Right ventricle myocardium superior (tissue), 1 donor: ENCODE measurements at regions of chr20 and their contacts with region 1.

Region 1: DNA sequence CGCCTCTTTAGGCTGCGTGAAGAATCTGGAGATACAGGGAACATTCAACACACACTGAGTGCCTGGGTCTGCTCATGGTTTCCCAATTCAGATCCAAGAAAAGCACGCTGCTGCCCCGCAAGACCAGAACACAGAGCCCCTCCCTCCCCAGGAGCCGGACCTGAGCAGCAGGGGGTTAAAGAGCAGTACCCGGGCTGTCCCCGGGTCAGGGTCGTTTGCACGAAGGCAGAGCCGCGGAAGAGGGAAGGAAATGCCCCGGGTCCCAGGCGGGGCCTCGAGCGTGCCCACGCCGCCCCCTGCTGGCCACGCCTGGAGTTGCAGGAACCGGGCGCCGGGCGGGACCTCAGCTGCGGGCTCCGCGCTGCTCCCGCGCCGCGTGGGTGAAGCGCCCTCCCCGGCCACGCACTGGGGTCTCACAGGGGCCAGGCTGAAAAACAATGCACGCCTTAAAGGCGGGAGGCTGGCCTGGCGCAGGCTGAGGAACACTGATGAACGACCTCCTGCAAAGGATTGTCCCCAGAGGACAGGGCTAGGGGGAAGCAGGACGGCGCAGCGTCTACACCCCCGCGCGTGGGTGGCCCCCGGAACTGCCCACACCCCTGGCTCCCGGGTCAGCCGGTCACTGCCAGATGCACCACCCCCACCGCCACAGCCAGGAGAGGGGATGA is 48.9 kb downstream of the ANKRD60 start:
- DNase-seq: peak; percentile 80
- ATAC-seq: peak; percentile 85

Region 2: DNA sequence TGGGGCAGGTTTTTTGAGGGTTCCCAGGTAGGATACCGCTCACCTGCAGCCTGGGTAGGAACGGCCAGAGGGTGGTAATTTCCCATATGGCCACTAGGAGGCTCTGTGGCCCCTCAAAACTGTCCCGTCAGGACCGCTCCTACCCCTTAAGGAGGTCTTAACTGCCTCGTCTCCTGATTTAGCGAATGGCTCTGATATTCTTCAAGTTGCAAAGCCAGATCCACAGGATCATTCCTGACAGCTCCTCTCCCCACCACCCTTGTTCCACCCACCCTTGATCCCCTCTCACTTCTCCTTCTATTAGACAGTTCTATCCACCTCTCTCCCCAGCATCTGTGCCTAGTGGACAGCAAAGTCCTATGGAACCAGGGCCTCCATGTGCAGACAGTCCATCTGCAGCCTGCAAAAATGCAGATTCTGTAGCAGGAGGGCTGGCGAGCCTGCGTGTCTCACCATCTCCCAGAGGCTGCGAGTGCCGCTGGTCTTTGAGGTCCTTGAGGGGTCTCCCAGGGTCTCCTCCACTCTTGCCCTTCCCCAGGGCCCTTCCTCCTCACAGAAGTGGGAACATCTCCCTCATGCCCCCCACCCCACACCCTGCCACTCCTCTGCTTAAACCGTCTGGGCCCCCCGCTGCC is 525.1 kb before region 1 on chr20:
- intact Hi-C with region 1: loop called (anchors 5 kb)
- DNase-seq: peak; percentile 55
- ATAC-seq: peak; percentile 73

Region 3: DNA sequence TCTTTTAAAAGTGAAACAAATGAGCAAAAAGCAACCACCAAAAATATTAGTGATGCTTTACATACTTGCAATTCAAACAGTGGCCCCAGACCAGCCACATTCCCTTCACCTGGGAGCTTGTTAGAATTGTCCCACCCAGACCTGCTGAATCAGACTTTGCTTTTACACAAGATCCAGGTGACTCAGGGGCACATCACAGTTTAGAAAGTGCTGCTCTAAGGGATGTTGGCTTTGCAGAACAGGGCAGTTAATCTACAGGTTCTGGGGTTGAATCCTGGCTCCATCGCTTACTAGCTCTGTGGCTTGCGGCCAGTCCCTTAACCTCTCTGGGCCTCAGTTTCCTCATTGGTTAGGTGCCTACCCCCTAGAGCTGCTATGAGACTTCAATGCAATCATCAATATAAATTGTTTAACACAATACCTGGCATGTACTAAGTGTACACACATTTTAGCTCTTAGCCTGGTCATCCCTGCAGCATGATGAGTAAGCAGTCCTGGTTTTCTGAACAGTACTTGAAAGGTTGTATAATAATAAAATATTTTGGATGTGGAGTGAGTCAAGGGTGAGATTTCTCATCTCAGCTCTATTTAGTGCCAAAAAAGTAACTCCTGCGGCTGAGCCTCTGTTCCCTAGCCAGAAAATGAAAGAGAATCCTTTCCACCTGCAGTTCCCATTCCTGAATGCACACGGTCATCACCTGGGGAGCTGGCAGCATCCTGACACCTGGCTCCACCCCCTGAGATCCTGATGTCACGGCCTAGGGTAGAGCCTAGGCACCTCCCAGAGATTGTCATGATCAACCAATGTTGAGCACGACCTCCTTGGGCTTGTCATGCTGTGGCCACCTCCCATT is 113.8 kb before region 1 on chr20:
- intact Hi-C with region 1: loop called (anchors 10 kb)
- DNase-seq: no peak
- ATAC-seq: no peak

Region 4: DNA sequence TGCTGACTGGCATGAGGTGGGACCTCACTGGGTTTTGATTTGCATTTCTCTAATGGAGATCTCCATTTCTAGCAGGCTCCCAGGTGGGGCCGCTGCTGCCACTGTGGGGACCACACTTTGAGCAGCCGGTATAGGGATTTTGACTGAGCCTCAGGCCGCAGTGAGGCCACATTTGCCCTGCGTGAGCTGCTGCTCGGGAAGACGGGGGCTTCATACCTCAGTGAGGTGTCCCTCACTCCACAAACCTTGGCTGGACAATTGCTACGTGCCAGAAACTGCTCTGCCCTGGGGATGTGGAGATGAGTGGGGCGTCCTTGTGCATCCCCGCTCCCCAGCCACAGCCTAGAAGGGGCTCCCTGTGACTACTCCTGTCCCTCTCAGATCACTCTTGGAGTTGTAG is 85.4 kb before region 1 on chr20:
- intact Hi-C with region 1: loop called (anchors 10 kb)
- DNase-seq: no peak
- ATAC-seq: no peak

Region 5: GRCh38 chr20:58251921-58252591 is 72.5 kb after region 1 on chr20:
- intact Hi-C with region 1: no loop called
- DNase-seq: no peak
- ATAC-seq: no peak